ENCODE measurements at regions of chr5 and their contacts with region 1.

Region 1: GRCh38 chr5:132063090-132063911 is 2.8 kb downstream of the IL3 start:
- DNase-seq: peak; percentile 67
- H3K4me3 ChIP-seq: no peak overlapping the region
- H3K27ac ChIP-seq: no peak overlapping the region
- H3K4me1 ChIP-seq: no peaks in the 10 kb centered on the region
- H3K27me3 ChIP-seq: no peaks in the 10 kb centered on the region
- CTCF ChIP-seq: peak; percentile 96

Region 2: DNA sequence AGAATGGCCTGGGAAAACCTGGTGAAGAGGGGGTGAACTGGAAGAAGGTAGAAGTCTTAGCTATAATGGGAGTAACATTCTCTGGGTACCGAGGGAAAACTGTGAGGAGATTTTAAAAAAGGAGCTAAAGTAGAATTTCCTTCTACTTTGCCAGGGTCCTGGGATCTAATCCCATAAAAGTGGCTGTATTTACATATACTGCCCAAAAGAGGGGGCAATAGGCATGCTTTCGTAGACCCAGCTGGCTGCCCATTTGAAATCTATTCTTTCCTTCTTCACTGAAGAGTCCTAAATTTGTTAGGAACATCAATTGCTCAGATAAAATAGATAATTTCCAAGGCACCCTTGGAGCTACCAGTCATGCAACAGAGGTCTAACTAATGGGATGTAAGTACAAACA is 640.2 kb before region 1 on chr5:
- CTCF ChIA-PET with region 1: interaction called, 3 read pairs
- POLR2A ChIA-PET with region 1: no interaction called
- intact Hi-C with region 1: loop called (anchors 2 kb)
- DNase-seq: peak; percentile 44
- H3K4me3 ChIP-seq: no peak overlapping the region
- H3K27ac ChIP-seq: no peak overlapping the region
- H3K4me1 ChIP-seq: no peaks in the 10 kb centered on the region
- H3K27me3 ChIP-seq: no peaks in the 10 kb centered on the region
- CTCF ChIP-seq: peak; percentile 73

Region 3: DNA sequence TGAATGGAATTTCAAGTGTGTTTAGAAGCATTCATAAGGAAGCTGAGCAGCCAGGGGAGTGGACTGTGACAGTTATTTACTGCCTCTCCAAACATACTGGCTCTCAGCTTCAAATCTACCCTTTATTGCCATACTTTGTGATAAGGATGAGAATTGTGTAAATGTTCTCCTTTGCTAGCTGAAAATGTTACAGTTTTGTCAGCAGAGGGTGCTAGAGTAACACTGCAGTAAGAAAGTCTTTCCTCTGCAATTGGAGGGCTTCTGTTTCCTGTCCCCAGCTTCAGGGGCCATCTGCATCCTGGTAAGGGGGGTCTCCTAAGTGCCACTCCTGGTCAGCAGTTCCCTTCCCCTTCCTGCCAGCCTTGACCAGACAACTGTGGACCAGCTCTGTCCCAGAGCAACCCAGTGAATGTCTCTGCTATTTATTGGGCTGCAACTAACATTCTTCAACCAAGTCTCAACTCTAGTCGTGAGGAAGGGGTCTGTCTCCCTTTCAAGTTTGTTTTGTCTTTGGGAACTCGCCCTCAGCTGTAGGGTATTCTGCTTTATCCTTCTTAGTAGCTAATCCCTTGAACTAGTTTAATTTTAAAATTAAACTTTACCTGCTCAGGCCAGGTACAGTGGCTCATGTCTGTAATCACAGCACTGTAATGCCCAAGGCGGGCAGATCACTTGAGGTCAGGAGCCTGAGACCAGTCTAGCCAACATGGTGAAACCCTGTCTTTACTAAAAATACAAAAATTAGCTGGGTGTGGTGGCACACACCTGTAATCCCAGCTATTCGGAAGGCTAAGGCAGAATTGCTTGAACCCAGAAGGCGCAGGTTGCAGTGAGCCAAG is 473.6 kb before region 1 on chr5:
- CTCF ChIA-PET with region 1: interaction called, 6 read pairs
- POLR2A ChIA-PET with region 1: no interaction called
- intact Hi-C with region 1: loop called (anchors 2 kb)
- DNase-seq: peak; percentile 61
- H3K4me3 ChIP-seq: no peak overlapping the region
- H3K27ac ChIP-seq: no peak overlapping the region
- H3K4me1 ChIP-seq: no peaks in the 10 kb centered on the region
- H3K27me3 ChIP-seq: no peaks in the 10 kb centered on the region
- CTCF ChIP-seq: peak; percentile 82